Naive thymus-derived CD4-positive, alpha-beta T cell (primary cell): ENCODE measurements at regions of chr5 and their contacts with region 1.

Region 1: GRCh38 chr5:134176511-134177368 is at the start of gene SKP1:
- DNase-seq: peak; percentile 80 to 93 (median 91)
- ATAC-seq: peak; percentile 92
- H3K4me3 ChIP-seq: peak within 1 kb of the TSS; percentile 96
- H3K4me3 Mint-ChIP-seq: peak within 1 kb of the TSS; percentile 90 to 99 (median 97)
- H3K27ac ChIP-seq: peak within 1 kb of the TSS; percentile 100
- H3K27ac Mint-ChIP-seq: peak within 1 kb of the TSS; percentile 98 to 99 (median 98)
- H3K4me1 ChIP-seq: peaks cover 25 to 30% of the 10 kb centered on the region in 2 donors
- H3K4me1 Mint-ChIP-seq: peaks cover 28 to 39% (median 32%) of the 10 kb centered on the region in 7 donors
- H3K27me3 ChIP-seq: no peaks in the 10 kb centered on the region
- H3K27me3 Mint-ChIP-seq: peaks cover 0 to 4% (median 0%) of the 10 kb centered on the region in 5 donors
- total RNA-seq, gene SKP1: 224 to 287 (median 268) TPM

Region 2: DNA sequence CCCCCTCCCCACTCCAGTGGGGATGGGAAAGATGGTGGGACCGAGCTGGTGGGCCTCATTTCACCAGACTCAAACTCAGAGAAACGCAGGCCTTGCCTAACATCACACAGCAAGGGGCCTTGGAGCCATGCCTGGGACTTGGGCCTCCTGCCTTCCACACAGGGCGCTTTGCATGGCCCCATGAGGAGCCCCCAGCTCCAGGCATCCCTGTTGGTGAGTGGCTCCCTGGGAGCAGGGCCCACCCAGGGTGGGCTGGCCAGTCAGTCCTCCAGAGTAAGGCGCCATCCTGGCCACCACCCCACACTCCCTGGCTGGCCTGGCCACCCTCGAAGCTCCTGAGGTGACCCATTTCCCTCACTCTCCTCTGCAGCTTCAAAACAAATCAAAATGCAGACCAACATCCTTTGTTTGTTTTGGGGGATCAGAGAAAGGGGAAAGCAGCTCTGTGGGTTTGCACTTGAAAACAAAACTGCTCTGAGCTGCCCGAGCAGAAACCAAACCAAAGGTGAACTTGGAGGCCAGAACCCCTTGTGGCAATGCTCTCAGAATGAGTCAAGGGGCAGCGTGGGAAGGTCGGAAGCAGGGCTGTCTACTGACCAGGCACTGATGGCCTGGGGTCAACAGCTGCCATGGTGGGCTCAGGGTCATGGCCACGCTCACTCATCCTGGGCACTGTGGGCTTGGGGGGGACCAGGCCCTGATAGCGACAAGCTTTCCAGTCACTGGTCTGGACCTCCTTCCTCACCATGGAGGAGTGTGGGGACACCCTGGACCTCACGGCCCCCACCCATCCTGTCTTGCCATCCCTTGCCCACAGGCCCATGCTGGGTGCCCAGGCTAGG is 134.9 kb before region 1 on chr5:
- CTCF ChIA-PET with region 1: interaction called, 7 read pairs
- POLR2A ChIA-PET with region 1: interaction called, 28 read pairs
- intact Hi-C with region 1: loop called in 1 of 2 experiments (anchors 1 kb)
- DNase-seq: peak in 1 of 9 donors; percentile 11
- ATAC-seq: no peak
- H3K4me3 ChIP-seq: no peak overlapping the region
- H3K4me3 Mint-ChIP-seq: peak overlapping the region; percentile 16 to 81 (median 53)
- H3K27ac ChIP-seq: peak overlapping the region; percentile 24
- H3K27ac Mint-ChIP-seq: peak overlapping the region in 8 of 9 donors; percentile 22 to 91 (median 62)
- H3K4me1 ChIP-seq: peaks cover 11 to 59% of the 10 kb centered on the region in 2 donors
- H3K4me1 Mint-ChIP-seq: peaks cover 26 to 88% (median 68%) of the 10 kb centered on the region in 7 donors
- H3K27me3 ChIP-seq: no peaks in the 10 kb centered on the region
- H3K27me3 Mint-ChIP-seq: peaks cover 0 to 6% (median 0%) of the 10 kb centered on the region in 5 donors

Region 3: DNA sequence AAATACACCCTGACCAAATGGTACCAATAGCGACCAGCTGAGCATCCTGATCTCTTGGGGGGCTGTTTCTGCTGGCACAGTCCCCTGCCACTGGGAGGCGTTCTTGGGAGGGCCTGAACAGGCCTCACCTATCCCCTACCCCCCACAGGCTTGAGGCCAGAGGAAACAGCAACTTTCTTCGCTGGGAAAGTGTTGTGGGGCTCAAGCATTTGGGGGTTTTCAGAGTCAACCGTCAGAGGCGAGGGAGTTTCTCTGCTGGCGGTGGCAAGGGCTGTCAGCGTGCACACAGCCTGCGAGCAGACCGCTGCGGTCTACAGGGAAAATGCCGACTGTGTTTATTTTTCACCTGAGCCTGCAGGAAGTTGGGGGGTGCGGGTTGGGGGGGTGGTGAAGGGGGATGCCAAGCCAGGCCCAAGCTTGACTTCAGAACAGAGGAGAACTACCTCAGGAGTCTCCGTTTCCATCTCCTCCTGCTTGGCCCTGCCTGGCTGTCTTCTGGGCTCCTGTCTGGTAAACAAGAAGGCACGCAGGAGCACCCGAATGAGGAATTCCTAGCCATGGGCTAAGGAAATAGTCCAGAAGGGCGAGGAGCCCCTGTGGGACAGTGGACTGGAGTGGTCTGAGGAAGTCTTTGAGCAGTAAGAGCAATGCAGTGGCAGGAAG is 44.2 kb before region 1 on chr5:
- CTCF ChIA-PET with region 1: no interaction called
- POLR2A ChIA-PET with region 1: interaction called, 11 read pairs
- intact Hi-C with region 1: no loop called
- DNase-seq: peak; percentile 52 to 94 (median 87)
- ATAC-seq: peak; percentile 87
- H3K4me3 ChIP-seq: peak overlapping the region; percentile 86
- H3K4me3 Mint-ChIP-seq: peak overlapping the region; percentile 93 to 100 (median 98)
- H3K27ac ChIP-seq: peak overlapping the region; percentile 97
- H3K27ac Mint-ChIP-seq: peak overlapping the region; percentile 90 to 99 (median 98)
- H3K4me1 ChIP-seq: peaks cover 92 to 97% of the 10 kb centered on the region in 2 donors
- H3K4me1 Mint-ChIP-seq: peaks cover 57 to 100% (median 90%) of the 10 kb centered on the region in 7 donors
- H3K27me3 ChIP-seq: no peaks in the 10 kb centered on the region
- H3K27me3 Mint-ChIP-seq: peaks cover 0 to 2% (median 0%) of the 10 kb centered on the region in 5 donors

Region 4: DNA sequence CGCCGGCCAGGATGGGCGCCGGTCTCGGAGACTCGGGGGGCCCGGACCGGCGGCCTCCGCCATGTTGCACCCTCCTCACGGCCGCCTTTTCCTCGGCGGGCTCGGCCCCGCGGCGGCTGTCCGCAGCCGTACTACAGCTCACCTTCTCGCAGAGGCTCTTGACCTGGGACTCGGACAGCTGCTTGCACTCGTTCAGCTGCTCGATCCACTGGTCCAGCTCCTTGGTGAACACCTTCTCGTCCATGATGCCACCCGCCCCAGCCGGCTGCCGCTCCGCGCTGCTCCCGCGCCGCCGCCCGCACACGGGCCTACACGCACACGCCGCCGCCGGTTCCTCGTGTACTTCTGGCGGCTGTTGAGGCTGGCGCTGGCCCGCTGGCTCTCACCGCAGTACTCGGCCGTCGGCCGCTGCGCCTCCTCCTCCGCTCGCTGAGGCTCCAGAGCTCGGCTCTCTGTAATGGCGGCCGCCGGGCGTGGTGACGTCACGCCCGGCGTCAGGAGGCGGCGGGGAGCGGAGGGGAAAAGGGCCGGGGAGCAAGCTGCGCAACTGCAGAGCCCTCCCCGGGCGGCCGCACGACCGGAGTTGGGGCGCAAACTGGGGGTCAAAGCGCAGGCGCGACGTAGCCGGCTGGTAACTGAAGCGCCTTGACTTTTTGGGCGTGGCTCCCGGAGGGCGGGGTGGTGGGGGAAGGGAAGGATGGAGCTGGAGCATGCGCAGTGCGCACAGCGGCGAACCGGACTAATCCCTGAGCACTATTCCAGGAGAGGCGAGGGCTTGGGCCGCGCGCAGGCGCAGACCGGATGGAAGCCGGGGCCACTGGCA is 49.1 kb after region 1 on chr5 and contains the start of gene PPP2CA:
- CTCF ChIA-PET with region 1: interaction called, 8 read pairs
- POLR2A ChIA-PET with region 1: interaction called, 55 read pairs
- intact Hi-C with region 1: loop called (anchors 1 kb)
- DNase-seq: peak; percentile 98 to 100 (median 99)
- ATAC-seq: peak; percentile 89
- H3K4me3 ChIP-seq: peak within 1 kb of the TSS; percentile 100
- H3K4me3 Mint-ChIP-seq: peak within 1 kb of the TSS; percentile 66 to 98 (median 96)
- H3K27ac ChIP-seq: peak within 1 kb of the TSS; percentile 100
- H3K27ac Mint-ChIP-seq: peak within 1 kb of the TSS; percentile 95 to 100 (median 98)
- H3K4me1 ChIP-seq: peaks cover 29 to 40% of the 10 kb centered on the region in 2 donors
- H3K4me1 Mint-ChIP-seq: peaks cover 37 to 58% (median 52%) of the 10 kb centered on the region in 7 donors
- H3K27me3 ChIP-seq: no peaks in the 10 kb centered on the region
- H3K27me3 Mint-ChIP-seq: peaks cover 0 to 4% (median 0%) of the 10 kb centered on the region in 5 donors
- total RNA-seq, gene PPP2CA: 89.5 to 168 (median 132) TPM

Region 5: DNA sequence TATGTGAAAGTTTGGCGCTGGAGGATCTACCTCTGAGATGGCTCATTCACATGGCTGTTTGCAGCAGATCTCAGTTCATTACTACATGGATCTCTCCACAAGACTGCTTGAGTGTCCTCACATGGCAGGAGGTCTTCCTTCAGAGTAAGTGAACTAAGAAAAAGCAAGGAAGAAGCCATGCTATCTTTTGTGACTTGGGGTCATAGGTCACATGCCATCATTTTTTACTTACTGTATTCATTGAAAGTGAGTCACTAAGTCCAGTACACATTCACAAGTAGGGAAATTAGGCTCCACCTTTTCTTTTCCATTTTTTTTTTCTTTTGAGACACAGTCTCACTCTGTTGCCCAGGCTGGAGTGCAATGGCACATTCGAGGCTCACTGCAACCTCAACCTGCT is 243.6 kb after region 1 on chr5:
- CTCF ChIA-PET with region 1: no interaction called
- POLR2A ChIA-PET with region 1: no interaction called
- intact Hi-C with region 1: no loop called
- DNase-seq: no peak
- ATAC-seq: no peak
- H3K4me3 ChIP-seq: no peak overlapping the region
- H3K4me3 Mint-ChIP-seq: no peak overlapping the region
- H3K27ac ChIP-seq: no peak overlapping the region
- H3K27ac Mint-ChIP-seq: no peak overlapping the region
- H3K4me1 ChIP-seq: no peaks in the 10 kb centered on the region
- H3K4me1 Mint-ChIP-seq: no peaks in the 10 kb centered on the region
- H3K27me3 ChIP-seq: no peaks in the 10 kb centered on the region
- H3K27me3 Mint-ChIP-seq: peaks cover 0 to 3% (median 0%) of the 10 kb centered on the region in 5 donors

Region 6: GRCh38 chr5:134637161-134637582 is 460.4 kb after region 1 on chr5:
- CTCF ChIA-PET with region 1: no interaction called
- POLR2A ChIA-PET with region 1: no interaction called
- intact Hi-C with region 1: loop called in 1 of 2 experiments (anchors 1 kb)
- DNase-seq: no peak
- ATAC-seq: no peak
- H3K4me3 ChIP-seq: no peak overlapping the region
- H3K4me3 Mint-ChIP-seq: no peak overlapping the region
- H3K27ac ChIP-seq: no peak overlapping the region
- H3K27ac Mint-ChIP-seq: no peak overlapping the region
- H3K4me1 ChIP-seq: no peaks in the 10 kb centered on the region
- H3K4me1 Mint-ChIP-seq: peaks cover 0 to 10% (median 4%) of the 10 kb centered on the region in 7 donors
- H3K27me3 ChIP-seq: no peaks in the 10 kb centered on the region
- H3K27me3 Mint-ChIP-seq: no peaks in the 10 kb centered on the region

Region 7: DNA sequence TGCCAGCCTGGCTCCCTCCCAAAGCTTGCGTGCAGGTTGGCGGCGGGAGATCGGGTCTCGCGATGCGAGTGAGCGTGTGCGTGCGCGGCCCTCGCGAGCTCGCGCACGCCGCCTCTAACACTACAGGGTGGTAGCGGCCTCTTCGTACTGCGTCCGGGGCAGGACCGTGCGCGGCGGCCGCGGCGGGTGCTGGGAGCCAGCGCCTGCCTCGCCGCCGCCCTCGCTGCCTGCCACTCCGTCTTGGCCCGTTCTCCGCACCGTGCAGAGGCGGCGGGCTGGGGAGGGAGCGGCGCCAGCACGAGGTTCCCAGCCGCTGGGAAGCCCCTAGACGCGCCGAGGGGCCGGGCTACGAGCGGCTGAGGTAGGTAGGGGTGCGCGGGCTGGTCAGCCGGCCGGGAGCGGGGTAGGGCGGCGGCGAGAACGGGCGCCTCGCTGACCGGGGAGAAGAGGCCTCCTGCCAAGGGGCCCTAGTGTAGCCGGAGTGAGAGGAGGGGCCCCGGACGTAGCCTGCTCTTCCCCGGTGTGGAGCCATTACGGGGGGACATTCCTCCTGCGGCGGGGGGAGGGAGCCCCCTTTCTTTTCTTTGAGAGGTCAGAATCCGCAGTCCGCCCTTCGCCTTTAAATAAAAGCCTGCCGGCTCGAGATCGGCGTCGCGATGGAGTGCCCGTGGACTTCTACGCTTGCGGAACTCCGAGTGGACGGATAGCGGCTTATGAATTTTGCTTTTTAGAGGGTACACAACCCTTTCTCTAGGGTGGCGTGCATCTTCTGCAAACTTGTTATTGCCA is 669.3 kb after region 1 on chr5 and contains the start of gene C5orf24:
- CTCF ChIA-PET with region 1: no interaction called
- POLR2A ChIA-PET with region 1: no interaction called
- intact Hi-C with region 1: loop called in 1 of 2 experiments (anchors 5 kb)
- DNase-seq: peak; percentile 83 to 93 (median 90)
- ATAC-seq: peak; percentile 98
- H3K4me3 ChIP-seq: peak within 1 kb of the TSS; percentile 60
- H3K4me3 Mint-ChIP-seq: peak within 1 kb of the TSS; percentile 84 to 99 (median 94)
- H3K27ac ChIP-seq: peak within 1 kb of the TSS; percentile 96
- H3K27ac Mint-ChIP-seq: peak within 1 kb of the TSS; percentile 94 to 99 (median 97)
- H3K4me1 ChIP-seq: peaks cover 16 to 19% of the 10 kb centered on the region in 2 donors
- H3K4me1 Mint-ChIP-seq: peaks cover 12 to 42% (median 31%) of the 10 kb centered on the region in 7 donors
- H3K27me3 ChIP-seq: no peaks in the 10 kb centered on the region
- H3K27me3 Mint-ChIP-seq: no peaks in the 10 kb centered on the region
- total RNA-seq, gene C5orf24: 20.3 to 42.7 (median 37.9) TPM